ENCODE measurements at regions of chr4 and their contacts with region 1.

Region 1: DNA sequence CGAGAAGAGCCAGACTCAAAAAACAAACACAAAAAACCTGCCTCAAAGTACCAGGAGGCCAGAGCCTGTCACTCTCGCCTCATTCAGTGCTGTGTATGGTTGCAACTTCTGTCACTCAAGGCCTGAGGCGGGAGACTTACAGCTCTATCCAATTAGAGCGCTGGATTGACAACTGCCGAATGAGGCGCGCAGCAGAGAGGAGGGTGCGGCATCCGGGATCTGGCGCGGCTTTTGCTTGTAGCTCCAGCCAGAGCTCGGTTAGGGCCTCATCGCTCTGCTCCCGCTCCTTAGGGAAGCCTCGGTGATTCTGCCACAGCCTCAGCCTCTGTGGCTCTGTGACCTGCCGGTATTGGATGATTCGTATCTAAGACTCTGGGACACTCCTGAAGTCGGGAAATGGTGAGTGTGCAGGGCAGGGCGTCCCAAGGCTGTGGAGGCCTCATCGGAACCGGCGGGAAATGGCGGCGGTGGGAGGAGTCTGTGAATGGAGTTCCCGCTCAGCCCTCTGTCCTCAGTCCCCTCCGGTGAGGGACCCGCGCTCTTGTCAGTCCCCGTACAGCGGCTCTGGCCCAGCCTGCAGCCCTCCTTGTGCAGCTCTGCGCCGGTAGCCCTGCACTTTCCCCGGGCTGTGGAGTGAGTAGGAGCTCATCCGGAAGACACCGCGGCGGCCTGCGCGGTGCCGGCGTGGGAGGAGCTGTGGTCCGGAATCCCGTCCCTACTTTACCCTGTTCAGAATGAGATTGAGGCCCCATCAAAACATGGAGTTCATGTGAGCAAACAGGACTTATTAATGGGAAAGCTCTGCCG is at the start of gene ZNF718:
- DNase-seq: peak; percentile 95
- ATAC-seq: peak; percentile 97
- H3K4me3 ChIP-seq: peak within 1 kb of the TSS; percentile 56 to 88 (median 80)
- H3K4me3 Mint-ChIP-seq: peak within 1 kb of the TSS; percentile 97
- H3K27ac ChIP-seq: peak within 1 kb of the TSS; percentile 70 to 82
- H3K27ac Mint-ChIP-seq: peak within 1 kb of the TSS; percentile 98
- H3K4me1 ChIP-seq: peaks cover 17 to 30% of the 10 kb centered on the region in 2 donors
- H3K4me1 Mint-ChIP-seq: peaks cover 32% of the 10 kb centered on the region
- H3K27me3 ChIP-seq: no peaks in the 10 kb centered on the region
- H3K27me3 Mint-ChIP-seq: no peaks in the 10 kb centered on the region
- CTCF ChIP-seq: no peak
- total RNA-seq, gene ZNF718: 18.0 and 18.2 TPM in 2 replicates

Region 2: DNA sequence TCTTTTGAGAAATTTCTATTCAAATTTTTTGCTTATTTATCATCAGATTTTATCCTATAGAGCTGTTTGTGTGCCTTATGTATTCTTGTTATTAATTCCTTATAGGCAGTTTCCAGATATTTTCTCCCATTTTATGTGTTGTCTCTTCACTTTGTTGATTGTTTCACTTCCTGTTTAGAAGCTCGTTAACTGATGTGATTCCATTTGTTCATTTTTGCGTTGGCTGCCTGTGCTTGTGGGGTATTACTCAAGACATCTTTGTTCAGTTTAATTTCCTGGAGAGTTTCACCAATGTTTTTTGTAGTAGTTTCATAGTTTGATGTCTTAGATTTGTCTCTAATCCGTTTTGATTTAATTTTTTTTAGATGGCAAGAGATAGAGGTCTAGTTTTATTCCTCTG is 14.5 kb after region 1 on chr4:
- CTCF ChIA-PET with region 1: interaction called, 10 read pairs
- POLR2A ChIA-PET with region 1: no interaction called
- intact Hi-C with region 1: no loop called
- DNase-seq: no peak
- ATAC-seq: no peak
- H3K4me3 ChIP-seq: no peak overlapping the region
- H3K4me3 Mint-ChIP-seq: no peak overlapping the region
- H3K27ac ChIP-seq: no peak overlapping the region
- H3K27ac Mint-ChIP-seq: no peak overlapping the region
- H3K4me1 ChIP-seq: no peaks in the 10 kb centered on the region
- H3K4me1 Mint-ChIP-seq: peaks cover 15% of the 10 kb centered on the region
- H3K27me3 ChIP-seq: no peaks in the 10 kb centered on the region
- H3K27me3 Mint-ChIP-seq: no peaks in the 10 kb centered on the region
- CTCF ChIP-seq: no peak

Region 3: GRCh38 chr4:161496-162284 is 37.2 kb after region 1 on chr4:
- CTCF ChIA-PET with region 1: no interaction called
- POLR2A ChIA-PET with region 1: no interaction called
- intact Hi-C with region 1: no loop called
- DNase-seq: no peak
- ATAC-seq: no peak
- H3K4me3 ChIP-seq: peak overlapping the region in 1 of 5 experiments; percentile 14
- H3K4me3 Mint-ChIP-seq: no peak overlapping the region
- H3K27ac ChIP-seq: no peak overlapping the region
- H3K27ac Mint-ChIP-seq: no peak overlapping the region
- H3K4me1 ChIP-seq: no peaks in the 10 kb centered on the region
- H3K4me1 Mint-ChIP-seq: no peaks in the 10 kb centered on the region
- H3K27me3 ChIP-seq: no peaks in the 10 kb centered on the region
- H3K27me3 Mint-ChIP-seq: no peaks in the 10 kb centered on the region
- CTCF ChIP-seq: no peak

Region 4: DNA sequence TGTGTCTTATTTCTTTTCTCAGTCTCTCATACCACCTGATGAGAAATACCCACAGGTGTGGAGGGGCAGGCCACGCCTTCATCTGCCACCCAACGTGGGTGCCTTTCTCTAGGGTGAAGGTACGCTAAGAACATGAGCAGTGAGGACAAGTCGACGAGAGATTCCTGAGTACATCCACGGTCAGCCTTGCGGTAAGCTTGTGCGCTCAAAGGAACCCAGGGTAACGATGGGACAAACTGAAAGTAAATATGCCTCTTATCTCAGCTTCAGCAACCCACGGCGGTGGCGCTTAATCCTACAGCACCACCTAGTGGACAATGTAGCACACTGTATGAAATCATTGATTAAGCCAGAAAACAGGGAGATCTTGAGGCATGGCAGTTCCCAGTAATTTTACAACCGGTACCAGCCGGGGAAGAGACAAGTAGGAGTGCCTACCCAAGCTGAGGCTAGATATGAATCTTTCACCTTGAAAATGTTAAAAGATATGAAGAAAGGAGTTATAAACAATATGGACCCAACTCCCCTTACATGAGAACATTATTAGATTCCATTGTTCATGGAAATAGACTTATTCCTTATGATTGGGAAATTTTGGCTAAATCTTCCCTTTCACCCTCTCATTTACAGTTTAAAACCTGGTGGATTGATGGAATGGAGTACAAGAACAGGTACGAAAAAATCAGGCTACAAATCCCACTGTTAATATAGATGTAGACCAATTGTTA is 117.8 kb after region 1 on chr4:
- CTCF ChIA-PET with region 1: interaction called, 7 read pairs
- POLR2A ChIA-PET with region 1: no interaction called
- intact Hi-C with region 1: loop called (anchors 5 kb)
- DNase-seq: peak; percentile 87
- ATAC-seq: peak; percentile 95
- H3K4me3 ChIP-seq: peak overlapping the region in 4 of 5 experiments; percentile 40 to 72 (median 50)
- H3K4me3 Mint-ChIP-seq: peak overlapping the region; percentile 92
- H3K27ac ChIP-seq: peak overlapping the region; percentile 57 to 70
- H3K27ac Mint-ChIP-seq: peak overlapping the region; percentile 92
- H3K4me1 ChIP-seq: peaks cover 5 to 13% of the 10 kb centered on the region in 2 donors
- H3K4me1 Mint-ChIP-seq: peaks cover 13% of the 10 kb centered on the region
- H3K27me3 ChIP-seq: no peaks in the 10 kb centered on the region
- H3K27me3 Mint-ChIP-seq: no peaks in the 10 kb centered on the region
- CTCF ChIP-seq: peak; percentile 88